Panc1 (cell line): ENCODE measurements at regions of chr2 and their contacts with region 1.

Region 1: GRCh38 chr2:10392951-10393644 is 55.0 kb downstream of the ODC1 start:
- DNase-seq: no peak
- ATAC-seq: no peak
- H3K4me3 ChIP-seq: no peak overlapping the region
- H3K27ac ChIP-seq: peak overlapping the region; percentile 57
- H3K4me1 ChIP-seq: peaks cover 74% of the 10 kb centered on the region
- H3K27me3 ChIP-seq: no peaks in the 10 kb centered on the region
- CTCF ChIP-seq: no peak

Region 2: DNA sequence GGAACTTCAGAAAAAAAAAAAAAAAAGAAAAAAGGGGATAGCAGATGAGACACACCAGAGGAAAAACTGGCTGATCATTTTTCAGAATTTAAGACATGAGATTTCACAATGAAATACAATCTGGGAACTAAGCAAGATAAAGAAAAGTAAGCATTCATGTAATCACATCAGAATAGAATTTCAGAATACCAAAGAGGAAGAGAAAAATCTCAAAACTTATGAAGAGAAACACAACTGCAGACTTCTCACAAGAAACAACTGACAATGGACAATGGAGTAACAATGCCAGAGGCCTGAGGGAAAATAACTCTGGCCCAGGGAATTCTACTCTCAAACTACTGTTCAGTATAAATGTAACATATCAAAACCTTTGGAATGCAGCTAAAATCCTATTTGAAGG is 283.8 kb before region 1 on chr2:
- CTCF ChIA-PET with region 1: interaction called, 12 read pairs
- POLR2A ChIA-PET with region 1: no interaction called
- in situ Hi-C with region 1: no loop called
- intact Hi-C with region 1: no loop called
- DNase-seq: no peak
- ATAC-seq: no peak
- H3K4me3 ChIP-seq: no peak overlapping the region
- H3K27ac ChIP-seq: peak overlapping the region; percentile 3; the same call in 1 of the 2 replicates
- H3K4me1 ChIP-seq: no peaks in the 10 kb centered on the region
- H3K27me3 ChIP-seq: no peaks in the 10 kb centered on the region
- CTCF ChIP-seq: no peak